ENCODE measurements at regions of chr4 and their contacts with region 1.

Region 1: DNA sequence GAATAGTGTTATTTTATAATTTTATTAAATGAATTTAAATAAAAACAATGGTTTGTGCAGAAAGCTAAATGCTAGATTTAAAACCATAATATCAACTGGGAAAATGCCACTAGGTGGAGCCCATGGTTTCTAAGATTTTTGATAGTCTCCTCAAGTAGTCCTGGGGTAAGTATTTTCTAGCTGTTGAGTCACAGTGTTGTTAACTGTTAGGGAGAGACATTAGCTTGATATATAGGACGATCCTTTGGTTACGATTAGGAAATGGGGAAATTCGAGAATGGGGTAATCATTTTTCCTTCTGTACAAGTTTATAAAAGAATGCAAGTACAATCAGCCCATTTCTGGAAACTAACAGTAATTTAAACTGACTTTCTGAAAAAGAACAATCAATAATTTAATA is 378.4 kb downstream of the ANKRD50 start:
- DNase-seq: peak in 1 of 2 donors; percentile 39
- H3K4me3 ChIP-seq: no peak overlapping the region
- CTCF ChIP-seq: no peak
- POLR2A ChIP-seq: no peak

Region 2: DNA sequence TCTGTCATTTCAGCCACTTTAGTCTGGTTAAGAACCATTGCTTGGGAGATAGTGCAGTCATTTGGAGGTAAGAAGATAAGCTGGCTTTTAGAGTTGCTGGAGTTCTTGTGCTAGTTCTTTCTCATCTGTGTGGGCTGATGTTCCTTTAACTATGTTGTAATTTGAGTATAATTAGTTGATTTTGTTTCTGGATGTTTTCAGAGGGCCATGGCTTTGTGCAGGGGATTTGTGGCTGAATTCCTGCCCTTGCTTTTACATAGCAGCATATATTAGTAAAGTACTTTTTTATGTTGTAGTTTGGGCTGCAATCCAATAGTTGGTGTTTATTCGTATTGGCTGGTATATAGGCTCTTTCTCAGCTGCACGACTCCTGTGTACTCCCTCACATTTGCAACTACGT is 38.8 kb after region 1 on chr4:
- intact Hi-C with region 1: no loop called
- DNase-seq: no peak
- H3K4me3 ChIP-seq: no peak overlapping the region
- CTCF ChIP-seq: no peak
- POLR2A ChIP-seq: no peak

Region 3: GRCh38 chr4:125276811-125277210 is 942.7 kb after region 1 on chr4:
- intact Hi-C with region 1: loop called (anchors 10 kb)
- DNase-seq: no peak
- H3K4me3 ChIP-seq: no peak overlapping the region
- CTCF ChIP-seq: no peak
- POLR2A ChIP-seq: no peak

Measured in lower leg skin (tissue), 4 donors.